ENCODE measurements at regions of chr6 and their contacts with region 1.

Region 1: DNA sequence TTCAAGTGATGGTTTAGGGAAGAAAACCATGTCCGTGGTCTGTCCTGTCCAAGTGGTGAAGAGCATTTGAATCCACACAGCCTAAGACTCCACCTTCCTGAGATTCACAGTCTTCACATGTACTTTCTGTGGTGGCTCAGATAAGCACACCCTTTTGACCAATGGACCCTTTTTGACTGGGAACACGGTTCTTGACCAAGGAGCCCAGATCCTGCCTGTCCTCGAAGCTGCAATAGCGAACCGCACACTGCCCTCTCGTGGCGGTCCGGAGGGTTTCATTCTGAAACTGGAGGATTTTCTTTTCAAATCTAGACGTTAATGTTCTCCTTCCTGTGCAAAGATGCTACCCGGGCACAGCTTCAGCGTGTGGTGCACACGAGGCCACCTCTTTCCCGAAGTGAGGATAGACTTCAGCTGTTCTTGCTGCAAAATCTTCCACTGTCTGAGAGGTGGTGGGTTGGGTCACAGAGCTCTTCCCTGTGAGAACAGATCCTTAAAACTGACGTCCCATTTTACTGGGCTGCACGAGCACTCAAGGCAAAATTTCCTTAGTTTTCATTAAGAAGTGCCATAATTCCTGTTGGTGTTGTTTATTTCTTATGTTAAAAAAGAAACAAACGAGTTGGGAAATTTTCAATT is 90.5 kb downstream of the SYNJ2 start:
- H3K4me3 ChIP-seq: no peak overlapping the region
- H3K27ac ChIP-seq: no peak overlapping the region
- H3K4me1 ChIP-seq: no peaks in the 10 kb centered on the region
- CTCF ChIP-seq: peak; percentile 64; the same call in 1 of the 2 replicates

Region 2: DNA sequence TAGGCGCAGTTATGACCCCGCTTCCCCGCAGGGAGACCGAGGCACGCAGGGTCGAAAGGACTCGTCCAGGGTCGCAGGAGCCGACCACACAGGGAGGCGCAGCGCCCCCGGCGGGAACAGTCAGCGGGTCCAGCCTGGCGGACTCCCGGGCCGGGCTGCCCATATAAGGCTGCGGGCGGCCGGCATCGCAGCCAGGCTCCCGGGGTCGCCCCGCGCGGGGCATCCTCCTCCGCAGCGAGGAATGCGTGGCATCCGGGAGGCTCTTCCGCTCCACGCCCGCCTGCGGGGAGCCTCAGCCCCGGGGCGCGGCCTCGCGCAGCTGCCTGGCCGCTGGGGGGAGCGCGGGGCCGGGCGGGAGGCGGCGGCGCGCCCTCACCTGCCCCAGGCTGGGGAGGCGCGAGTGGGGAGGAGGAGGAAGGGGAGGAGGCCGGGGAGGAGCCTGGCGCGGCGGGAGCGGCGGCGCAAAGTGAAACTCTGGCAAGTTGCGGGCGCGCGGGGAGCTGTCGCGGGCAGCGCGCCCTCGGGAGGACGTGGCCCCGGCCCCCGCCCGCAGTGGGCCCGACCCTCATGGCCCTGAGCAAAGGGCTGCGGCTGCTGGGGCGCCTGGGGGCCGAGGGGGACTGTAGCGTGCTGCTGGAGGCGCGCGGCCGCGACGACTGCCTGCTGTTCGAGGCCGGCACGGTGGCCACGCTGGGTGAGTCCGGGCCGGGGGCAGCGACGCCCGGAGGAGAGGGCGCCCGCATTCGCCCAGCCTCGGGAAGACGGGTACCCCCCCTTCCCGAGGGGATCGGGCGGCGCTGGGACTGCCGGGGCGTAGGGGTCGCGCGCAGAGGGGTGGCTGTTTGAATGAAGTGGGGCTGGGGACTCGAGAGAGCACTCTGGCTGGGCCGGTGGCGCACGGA is 90.6 kb before region 1 on chr6 and contains the start of gene SYNJ2:
- CTCF ChIA-PET with region 1: interaction called, 18 read pairs
- POLR2A ChIA-PET with region 1: interaction called, 3 read pairs
- H3K4me3 ChIP-seq: peak within 1 kb of the TSS; percentile 71
- H3K27ac ChIP-seq: peak within 1 kb of the TSS; percentile 81; the same call in 1 of the 2 replicates
- H3K4me1 ChIP-seq: peaks cover 12% of the 10 kb centered on the region
- CTCF ChIP-seq: 0 out of 2 replicates have a peak, but pooled peaks have one; percentile 39

Region 3: DNA sequence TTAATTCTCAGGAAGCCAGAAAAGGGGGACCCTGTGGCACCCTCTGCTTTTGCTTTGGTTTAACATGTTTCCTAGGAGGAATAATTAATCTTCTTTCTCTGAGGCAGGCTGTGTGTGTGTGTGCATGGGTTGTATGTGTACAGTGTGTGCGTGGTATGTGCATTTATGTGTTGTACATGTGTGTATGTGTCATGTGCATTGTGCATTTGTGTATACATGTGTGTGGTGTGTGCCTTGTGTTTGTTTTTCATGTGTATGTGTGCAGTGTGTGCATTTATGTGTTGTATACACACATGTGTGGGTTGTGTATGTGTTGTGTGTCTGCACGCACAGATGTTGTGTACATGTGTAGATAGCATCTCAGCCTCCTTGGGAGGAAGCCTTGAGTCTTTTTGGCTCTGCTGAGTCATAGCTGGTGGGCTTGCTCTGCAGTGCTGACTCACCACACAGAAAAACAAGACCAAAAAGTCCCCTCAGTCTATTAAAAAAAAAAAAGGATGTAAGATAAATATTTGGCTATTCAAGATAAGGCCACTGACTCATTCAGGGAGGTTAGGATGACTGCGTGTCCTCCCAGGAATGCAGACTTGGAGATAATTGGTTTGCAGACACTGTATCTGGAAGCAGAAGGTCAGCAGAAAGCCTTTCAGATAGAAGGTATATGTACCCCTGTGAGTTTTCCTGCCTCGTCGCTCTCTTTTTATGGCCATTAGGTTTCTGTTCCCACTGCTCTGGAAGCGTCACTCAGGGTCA is 32.0 kb before region 1 on chr6:
- CTCF ChIA-PET with region 1: interaction called, 24 read pairs
- POLR2A ChIA-PET with region 1: interaction called, 3 read pairs
- H3K4me3 ChIP-seq: 0 out of 2 replicates have a peak overlapping the region, but pooled peaks have one; percentile 1
- H3K27ac ChIP-seq: peak overlapping the region; percentile 57
- H3K4me1 ChIP-seq: peaks cover 36% of the 10 kb centered on the region
- CTCF ChIP-seq: no peak

Region 4: DNA sequence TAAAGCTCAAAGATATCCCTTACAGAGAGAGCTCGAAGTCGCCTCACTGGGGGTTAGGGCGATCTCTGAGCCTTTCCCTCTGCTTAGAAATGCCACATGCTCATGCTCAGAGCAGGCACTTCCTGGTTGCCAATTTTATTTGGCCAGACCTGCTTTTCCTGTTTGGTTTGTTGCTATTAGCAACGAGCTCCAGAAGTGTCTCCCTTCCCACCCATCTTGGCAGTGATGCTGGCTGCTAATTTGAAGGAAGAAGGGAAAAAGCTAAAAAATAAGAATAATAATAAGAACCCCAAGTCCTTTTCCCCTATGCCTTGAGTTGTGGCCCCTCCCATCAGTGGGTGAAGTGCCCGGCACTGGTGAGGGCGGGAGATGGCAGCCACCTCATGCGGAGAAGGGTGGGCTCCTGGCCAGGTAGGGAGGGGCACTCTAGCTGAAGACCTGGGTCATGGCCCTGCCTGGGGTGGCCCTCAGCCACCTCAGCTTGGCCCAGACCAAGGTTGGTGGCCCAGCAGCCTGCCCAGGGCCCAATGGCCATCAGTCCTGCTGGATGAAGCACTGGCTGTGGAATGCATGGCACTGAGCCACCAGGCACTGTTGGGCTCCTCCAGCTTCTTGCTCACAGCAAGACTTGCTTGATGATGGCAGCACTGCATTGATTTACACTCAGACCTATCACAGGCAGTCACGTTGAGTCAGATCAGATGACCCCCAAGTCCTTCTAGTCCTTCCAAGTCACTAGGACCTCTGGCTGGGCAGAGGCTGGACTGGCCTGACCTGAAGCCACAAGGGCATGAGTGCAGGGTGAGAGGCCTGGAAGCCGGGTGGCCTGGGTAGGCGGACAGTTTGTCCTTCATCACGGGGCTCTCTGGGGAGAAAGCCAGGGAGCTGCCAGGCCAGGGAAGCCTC is 11.5 kb before region 1 on chr6:
- CTCF ChIA-PET with region 1: interaction called, 35 read pairs
- POLR2A ChIA-PET with region 1: interaction called, 4 read pairs
- H3K4me3 ChIP-seq: no peak overlapping the region
- H3K27ac ChIP-seq: no peak overlapping the region
- H3K4me1 ChIP-seq: no peaks in the 10 kb centered on the region
- CTCF ChIP-seq: no peak

Region 5: GRCh38 chr6:158086054-158086503 is 13.9 kb after region 1 on chr6:
- CTCF ChIA-PET with region 1: interaction called, 10 read pairs
- POLR2A ChIA-PET with region 1: no interaction called
- H3K4me3 ChIP-seq: no peak overlapping the region
- H3K27ac ChIP-seq: no peak overlapping the region
- H3K4me1 ChIP-seq: no peaks in the 10 kb centered on the region
- CTCF ChIP-seq: no peak